ENCODE measurements at regions of chr2 and their contacts with region 1.

Region 1: GRCh38 chr2:206800506-206801417 is 35.4 kb downstream of the FASTKD2 start:
- DNase-seq: peak; percentile 67
- H3K4me3 Mint-ChIP-seq: peak overlapping the region; percentile 58
- H3K27ac Mint-ChIP-seq: no peak overlapping the region
- H3K4me1 Mint-ChIP-seq: peaks cover 18% of the 10 kb centered on the region
- H3K27me3 Mint-ChIP-seq: no peaks in the 10 kb centered on the region

Region 2: GRCh38 chr2:206635031-206635430 is 165.7 kb before region 1 on chr2:
- CTCF ChIA-PET with region 1: no interaction called
- DNase-seq: no peak
- H3K4me3 Mint-ChIP-seq: no peak overlapping the region
- H3K27ac Mint-ChIP-seq: no peak overlapping the region
- H3K4me1 Mint-ChIP-seq: no peaks in the 10 kb centered on the region
- H3K27me3 Mint-ChIP-seq: no peaks in the 10 kb centered on the region

Region 3: GRCh38 chr2:206790311-206790935 is 10.3 kb before region 1 on chr2:
- CTCF ChIA-PET with region 1: interaction called, 14 read pairs
- DNase-seq: no peak
- H3K4me3 Mint-ChIP-seq: no peak overlapping the region
- H3K27ac Mint-ChIP-seq: no peak overlapping the region
- H3K4me1 Mint-ChIP-seq: no peaks in the 10 kb centered on the region
- H3K27me3 Mint-ChIP-seq: no peaks in the 10 kb centered on the region

Region 4: DNA sequence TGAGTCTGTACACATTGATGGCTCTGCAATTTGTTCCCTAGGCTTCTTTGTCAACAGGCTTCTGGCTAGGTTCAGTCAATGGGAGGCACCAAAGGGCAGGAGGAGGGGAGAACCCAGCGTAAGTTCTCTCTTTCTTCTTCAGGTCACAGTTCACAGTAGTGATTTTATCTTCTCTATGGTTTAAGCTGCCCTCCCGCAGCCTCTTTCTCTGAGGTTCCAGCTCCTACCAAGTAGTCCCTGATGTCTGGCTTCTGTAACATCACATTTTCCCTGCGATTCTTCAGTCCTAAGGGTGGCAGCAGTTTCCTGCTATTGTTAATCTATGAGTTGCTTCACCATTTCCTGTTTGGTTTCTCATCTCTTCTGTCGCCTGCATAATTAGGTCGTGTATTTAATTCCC is 246.0 kb after region 1 on chr2:
- CTCF ChIA-PET with region 1: interaction called, 20 read pairs
- DNase-seq: peak; percentile 43
- H3K4me3 Mint-ChIP-seq: no peak overlapping the region
- H3K27ac Mint-ChIP-seq: no peak overlapping the region
- H3K4me1 Mint-ChIP-seq: peaks cover 14% of the 10 kb centered on the region
- H3K27me3 Mint-ChIP-seq: peaks cover 4% of the 10 kb centered on the region